ENCODE measurements at regions of chr2 and their contacts with region 1.

Region 1: GRCh38 chr2:226800941-226801784 is 1.5 kb upstream of the IRS1 start:
- DNase-seq: peak; percentile 91
- ATAC-seq: peak; percentile 79

Region 2: DNA sequence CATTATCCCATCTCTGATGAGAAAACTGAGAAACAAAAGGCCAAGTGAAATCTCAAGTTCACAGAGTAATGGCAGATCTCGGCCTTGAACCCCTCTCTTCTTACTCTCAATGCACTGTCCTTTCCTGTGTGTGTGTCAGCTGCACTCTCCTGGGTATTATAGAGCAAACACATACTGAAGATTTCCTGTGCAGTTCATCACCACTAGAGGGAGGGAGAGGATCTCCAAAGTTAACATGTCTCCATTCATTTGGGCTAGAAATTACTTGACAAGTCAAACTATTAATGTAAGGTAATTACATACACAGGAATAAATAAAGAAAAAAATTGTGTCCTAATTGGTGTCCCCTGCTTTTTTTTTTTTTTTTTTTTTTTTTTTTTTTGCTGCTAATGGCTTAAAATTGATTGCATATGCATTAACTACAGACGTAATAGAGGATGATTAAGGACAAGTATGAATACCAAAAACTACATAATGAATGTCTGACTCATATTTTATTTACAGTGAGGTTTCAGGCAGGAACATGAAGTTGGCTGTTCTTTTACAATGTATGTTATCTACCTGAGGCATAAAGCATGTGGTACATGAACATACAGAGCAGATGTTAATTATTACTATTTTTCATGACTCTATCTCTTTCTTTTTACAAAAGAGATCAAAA is 1132.4 kb before region 1 on chr2:
- intact Hi-C with region 1: loop called (anchors 2 kb)
- DNase-seq: no peak
- ATAC-seq: peak; percentile 58

Region 3: GRCh38 chr2:225889446-225889850 is 911.7 kb before region 1 on chr2:
- intact Hi-C with region 1: loop called (anchors 1 kb)
- DNase-seq: no peak
- ATAC-seq: no peak

Region 4: GRCh38 chr2:226215902-226216503 is 585.2 kb before region 1 on chr2:
- intact Hi-C with region 1: loop called (anchors 5 kb)
- DNase-seq: peak; percentile 27
- ATAC-seq: peak; percentile 75